Common myeloid progenitor, CD34-positive (primary cell): ENCODE measurements at regions of chr10 and their contacts with region 1.

Region 1: DNA sequence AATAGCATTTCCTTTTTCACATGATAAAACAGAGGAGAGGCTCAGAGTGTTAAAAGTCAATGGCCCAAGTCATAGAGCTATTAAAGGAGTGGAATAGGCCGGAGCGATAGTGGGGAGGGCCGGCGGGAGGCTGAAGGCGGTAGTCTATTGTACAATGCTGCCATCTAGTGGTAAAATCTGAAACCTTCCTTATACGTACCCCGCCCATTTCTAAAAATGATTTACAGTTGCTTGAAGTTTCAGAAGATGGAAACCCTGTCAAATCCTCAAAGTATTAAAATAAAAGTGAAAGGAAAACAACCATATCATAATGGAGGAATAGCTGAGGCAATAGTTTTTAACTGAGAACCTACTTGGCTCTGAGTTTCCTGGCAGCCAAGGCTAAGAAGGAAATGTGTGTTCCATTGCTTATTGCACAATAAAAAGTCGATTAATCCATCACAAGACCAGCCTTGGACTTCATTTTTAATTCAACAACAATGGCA is 209.1 kb downstream of the CCSER2 start:
- DNase-seq: peak; percentile 67 to 85 (median 79)
- H3K4me3 ChIP-seq: no peak overlapping the region
- H3K27ac ChIP-seq: no peak overlapping the region
- H3K4me1 ChIP-seq: peaks cover 0 to 9% (median 6%) of the 10 kb centered on the region in 4 experiments
- H3K27me3 ChIP-seq: peaks cover 0 to 42% (median 12%) of the 10 kb centered on the region in 5 experiments

Region 2: DNA sequence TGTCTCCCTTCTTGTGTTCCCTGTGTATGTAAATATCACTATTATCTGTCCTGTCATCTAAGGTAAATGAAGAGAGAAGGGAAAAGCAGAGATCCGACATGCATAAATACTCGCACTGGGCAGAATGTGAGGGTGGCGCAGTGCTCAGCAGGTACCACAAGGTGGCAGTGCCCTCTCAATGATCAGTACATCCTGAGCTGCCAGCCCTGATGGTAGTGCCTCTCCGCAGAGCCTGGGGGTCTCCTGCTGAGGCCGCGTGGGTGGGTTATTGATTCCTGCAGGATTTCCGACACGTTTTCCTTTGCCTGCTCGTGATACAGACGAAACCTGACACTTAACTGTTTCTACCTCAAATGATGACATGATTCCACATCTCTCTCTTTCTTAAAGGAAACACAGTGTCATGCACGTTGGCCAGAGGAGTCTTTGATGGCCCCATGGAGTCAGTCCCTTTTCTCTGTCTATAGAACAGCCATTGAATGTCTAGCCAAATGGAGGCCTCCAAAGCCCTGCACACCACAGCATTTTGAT is 272.8 kb before region 1 on chr10:
- CTCF ChIA-PET with region 1: interaction called, 139 read pairs
- POLR2A ChIA-PET with region 1: no interaction called
- DNase-seq: peak; percentile 58 to 74 (median 68)
- H3K4me3 ChIP-seq: no peak overlapping the region
- H3K27ac ChIP-seq: no peak overlapping the region
- H3K4me1 ChIP-seq: peaks cover 0 to 9% (median 2%) of the 10 kb centered on the region in 4 experiments
- H3K27me3 ChIP-seq: peaks cover 0 to 8% (median 0%) of the 10 kb centered on the region in 5 experiments

Region 3: GRCh38 chr10:84352251-84352842 is 185.1 kb before region 1 on chr10:
- CTCF ChIA-PET with region 1: interaction called, 34 read pairs
- POLR2A ChIA-PET with region 1: no interaction called
- DNase-seq: peak; percentile 63 to 77 (median 74)
- H3K4me3 ChIP-seq: no peak overlapping the region
- H3K27ac ChIP-seq: no peak overlapping the region
- H3K4me1 ChIP-seq: no peaks in the 10 kb centered on the region
- H3K27me3 ChIP-seq: no peaks in the 10 kb centered on the region

Region 4: GRCh38 chr10:84375011-84375410 is 162.5 kb before region 1 on chr10:
- CTCF ChIA-PET with region 1: interaction called, 138 read pairs
- POLR2A ChIA-PET with region 1: no interaction called
- DNase-seq: peak; percentile 71 to 81 (median 74)
- H3K4me3 ChIP-seq: no peak overlapping the region
- H3K27ac ChIP-seq: no peak overlapping the region
- H3K4me1 ChIP-seq: no peaks in the 10 kb centered on the region
- H3K27me3 ChIP-seq: no peaks in the 10 kb centered on the region

Region 5: DNA sequence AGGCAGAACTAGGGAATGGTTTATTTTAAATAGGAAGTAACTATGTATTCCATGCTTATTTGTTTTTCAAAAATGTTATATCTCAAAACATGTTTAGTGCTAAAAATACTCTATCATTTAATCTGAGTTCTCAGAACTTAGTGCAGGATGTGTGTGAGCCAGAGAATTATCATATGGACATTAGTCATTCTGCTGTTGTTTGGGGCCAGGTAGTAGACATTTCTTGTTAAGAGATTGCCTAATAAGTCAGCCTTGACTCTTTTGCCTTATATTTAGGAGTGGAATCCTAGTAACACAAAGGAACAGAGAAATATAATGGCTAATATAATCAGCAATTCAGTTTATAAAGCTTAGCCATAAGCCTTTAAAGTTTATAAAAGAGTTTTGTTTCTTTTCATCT is 59.3 kb before region 1 on chr10:
- CTCF ChIA-PET with region 1: no interaction called
- POLR2A ChIA-PET with region 1: no interaction called
- DNase-seq: peak in 1 of 3 donors; percentile 21
- H3K4me3 ChIP-seq: no peak overlapping the region
- H3K27ac ChIP-seq: peak overlapping the region in 1 of 2 experiments; percentile 23
- H3K4me1 ChIP-seq: peaks cover 0 to 13% (median 8%) of the 10 kb centered on the region in 4 experiments
- H3K27me3 ChIP-seq: no peaks in the 10 kb centered on the region

Region 6: DNA sequence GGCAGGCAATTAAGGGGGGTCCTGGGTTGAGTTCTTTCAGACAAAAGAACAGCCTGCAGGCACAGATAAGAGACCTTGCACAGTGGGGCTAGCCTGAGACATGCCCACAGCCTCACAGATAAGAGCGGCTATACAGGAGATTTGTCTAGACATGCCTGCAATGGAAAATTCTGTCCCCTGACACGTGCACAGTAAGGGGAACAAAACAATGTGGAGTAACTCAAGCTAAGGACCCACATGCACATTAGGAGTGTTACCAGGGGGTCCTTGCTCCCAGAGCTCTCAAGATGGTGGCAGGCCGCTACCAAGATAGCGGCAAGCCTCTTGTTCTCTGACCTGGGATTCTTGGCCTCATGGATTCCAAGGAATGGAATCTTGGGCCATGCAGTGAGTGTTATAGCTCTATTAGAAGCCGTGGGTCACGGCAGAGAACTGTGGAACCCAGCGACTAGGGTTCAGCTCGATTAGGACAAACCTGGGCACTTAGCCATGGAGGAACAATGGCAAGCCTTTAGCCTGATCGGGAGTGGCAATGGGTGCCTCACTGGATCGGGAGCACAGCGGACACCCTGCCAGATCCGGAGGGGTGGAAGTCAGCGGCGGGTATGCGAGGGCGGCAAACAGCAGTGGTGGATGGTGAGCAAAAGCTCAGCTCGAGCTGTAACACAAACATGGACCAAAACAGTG is 12.2 kb before region 1 on chr10:
- CTCF ChIA-PET with region 1: interaction called, 18 read pairs
- POLR2A ChIA-PET with region 1: no interaction called
- DNase-seq: peak; percentile 75 to 92 (median 85)
- H3K4me3 ChIP-seq: no peak overlapping the region
- H3K27ac ChIP-seq: no peak overlapping the region
- H3K4me1 ChIP-seq: peaks cover 0 to 4% (median 0%) of the 10 kb centered on the region in 4 experiments
- H3K27me3 ChIP-seq: no peaks in the 10 kb centered on the region